Transverse colon (tissue), 4 donors: ENCODE measurements at regions of chr2 and their contacts with region 1.

Region 1: GRCh38 chr2:142989273-142990204 is 112.1 kb downstream of the KYNU start:
- DNase-seq: no peak
- H3K4me3 ChIP-seq: no peak overlapping the region
- H3K27ac ChIP-seq: no peak overlapping the region
- H3K4me1 ChIP-seq: no peaks in the 10 kb centered on the region
- H3K27me3 ChIP-seq: no peaks in the 10 kb centered on the region
- CTCF ChIP-seq: peak; percentile 19 to 54 (median 46)
- EP300 ChIP-seq: no peak
- POLR2A ChIP-seq: no peak

Region 2: DNA sequence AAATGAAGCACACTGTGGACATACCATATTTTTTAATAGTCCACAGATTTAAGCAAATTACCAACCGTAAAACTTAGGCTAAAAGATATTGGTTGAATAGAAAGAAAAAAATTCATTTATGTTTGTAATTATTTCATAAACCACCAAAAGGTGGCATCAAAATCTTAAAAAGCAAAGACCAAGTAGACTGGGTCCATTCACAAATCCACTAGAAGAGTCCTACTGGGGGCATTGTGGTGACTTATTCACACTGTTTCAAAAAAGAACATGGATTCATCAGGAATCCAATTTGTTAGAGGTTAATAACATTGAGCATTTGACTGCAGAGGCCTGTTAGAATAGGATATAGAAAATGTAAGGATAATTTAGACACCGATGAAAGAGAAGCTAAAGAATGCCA is 307.0 kb before region 1 on chr2:
- in situ Hi-C with region 1: loop called in 2 of 4 experiments (anchors 25 kb)
- intact Hi-C with region 1: no loop called
- DNase-seq: no peak
- H3K4me3 ChIP-seq: no peak overlapping the region
- H3K27ac ChIP-seq: no peak overlapping the region
- H3K4me1 ChIP-seq: no peaks in the 10 kb centered on the region
- H3K27me3 ChIP-seq: no peaks in the 10 kb centered on the region
- CTCF ChIP-seq: no peak
- EP300 ChIP-seq: no peak
- POLR2A ChIP-seq: no peak